ENCODE measurements at regions of chr3 and their contacts with region 1.

Region 1: DNA sequence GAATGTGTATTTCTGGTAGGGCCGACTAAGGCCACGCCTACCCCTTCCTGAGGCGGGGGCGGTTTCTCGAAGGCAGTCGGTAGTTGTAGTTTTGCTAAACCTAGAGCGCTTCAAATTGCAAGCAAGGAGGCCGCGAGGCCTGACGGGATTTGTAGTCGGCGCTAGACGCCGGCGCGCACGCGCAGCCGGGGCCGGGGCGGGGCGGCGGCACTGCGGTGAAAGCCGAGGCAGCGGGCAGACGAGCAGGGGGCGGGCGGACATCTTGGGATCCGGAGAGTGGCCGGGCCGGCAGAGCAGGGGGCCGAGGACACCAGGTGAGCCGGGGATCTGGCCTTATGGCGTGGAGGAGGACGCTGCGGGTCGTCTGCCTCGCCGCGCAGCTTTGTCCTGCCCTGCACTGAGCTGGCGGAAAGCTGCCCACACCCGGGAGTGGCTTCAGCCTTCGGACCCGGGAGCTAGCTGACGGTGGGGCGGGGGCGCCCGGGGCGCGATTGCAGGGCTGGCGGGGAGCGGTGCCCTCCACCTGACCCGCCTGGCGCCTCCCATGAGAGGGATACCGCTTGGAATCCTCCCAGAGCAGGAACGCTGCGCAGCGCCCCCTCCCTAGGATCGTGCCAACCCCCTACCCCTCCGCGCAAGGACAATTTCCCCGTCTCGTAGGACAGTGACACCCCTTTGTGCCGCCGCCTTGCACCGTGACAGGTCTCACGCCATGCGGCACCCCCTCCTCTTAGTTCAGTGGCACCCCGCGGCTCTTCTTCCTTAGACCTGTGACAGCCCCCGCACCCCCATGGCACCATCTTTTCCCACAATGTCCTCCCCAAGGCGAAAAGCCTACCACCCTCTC is at the start of gene AP2M1:
- DNase-seq: peak; percentile 99
- H3K4me3 ChIP-seq: peak within 1 kb of the TSS; percentile 94
- H3K27ac ChIP-seq: peak within 1 kb of the TSS; percentile 29
- H3K4me1 ChIP-seq: peaks cover 26% of the 10 kb centered on the region
- CTCF ChIP-seq: 0 out of 2 replicates have a peak, but pooled peaks have one; percentile 37
- total RNA-seq, gene AP2M1: 141 and 147 TPM in 2 replicates

Region 2: DNA sequence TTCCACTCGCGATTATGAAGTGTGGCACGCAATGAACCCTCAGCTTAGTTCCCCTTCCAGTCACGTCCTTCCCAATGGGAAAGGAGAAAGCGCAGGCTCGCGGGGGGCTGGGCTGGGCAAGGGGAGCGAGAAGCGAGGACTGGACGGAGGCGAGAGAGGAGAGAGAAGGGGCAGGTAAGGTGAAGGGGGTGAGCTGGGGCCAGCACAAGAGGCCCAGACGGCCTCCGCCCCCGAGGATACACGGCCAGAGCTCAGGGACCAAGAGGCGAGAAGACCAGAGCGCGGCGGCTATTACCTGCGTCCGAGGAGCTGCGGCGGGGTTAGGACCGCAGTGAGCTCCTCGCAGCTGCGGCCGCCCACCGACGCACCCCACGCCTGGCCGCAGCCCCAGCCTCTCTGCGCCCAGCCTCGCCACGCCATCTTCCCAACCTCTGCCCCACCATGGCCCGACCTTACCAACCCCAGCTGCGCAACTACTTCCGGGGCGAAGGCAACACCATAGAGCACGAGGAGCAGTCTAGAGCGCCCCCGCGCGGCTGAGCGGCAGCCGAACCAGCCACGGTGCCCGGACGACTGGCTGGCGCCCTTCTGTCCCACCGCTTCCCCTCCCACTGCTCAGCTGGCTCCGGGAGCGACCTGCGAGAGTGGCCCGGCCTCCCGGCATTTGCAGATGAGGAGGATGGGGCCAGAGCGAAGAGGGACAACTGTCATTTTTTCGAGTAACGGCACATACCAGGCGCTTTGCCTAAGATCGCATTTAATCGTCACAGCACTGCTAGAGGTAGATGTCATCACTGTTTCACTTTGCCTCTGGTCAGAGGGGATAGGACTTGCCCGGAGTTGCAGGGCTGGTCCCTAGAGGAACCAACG is 290.2 kb before region 1 on chr3 and contains the start of gene PARL:
- CTCF ChIA-PET with region 1: no interaction called
- POLR2A ChIA-PET with region 1: no interaction called
- intact Hi-C with region 1: no loop called
- DNase-seq: peak; percentile 95
- H3K4me3 ChIP-seq: peak within 1 kb of the TSS; percentile 76
- H3K27ac ChIP-seq: peak within 1 kb of the TSS; percentile 47
- H3K4me1 ChIP-seq: peaks cover 19% of the 10 kb centered on the region
- CTCF ChIP-seq: peak; percentile 86
- total RNA-seq, gene PARL: 43.5 and 46.1 TPM in 2 replicates

Region 3: GRCh38 chr3:184154885-184155643 is 19.8 kb before region 1 on chr3 and contains the start of gene DVL3:
- CTCF ChIA-PET with region 1: no interaction called
- POLR2A ChIA-PET with region 1: interaction called, 4 read pairs
- intact Hi-C with region 1: loop called (anchors 1 kb)
- DNase-seq: peak; percentile 74
- H3K4me3 ChIP-seq: peak within 1 kb of the TSS; percentile 92
- H3K27ac ChIP-seq: peak within 1 kb of the TSS; percentile 52
- H3K4me1 ChIP-seq: peaks cover 23% of the 10 kb centered on the region
- CTCF ChIP-seq: no peak
- total RNA-seq, gene DVL3: 38.5 and 41.3 TPM in 2 replicates

Region 4: DNA sequence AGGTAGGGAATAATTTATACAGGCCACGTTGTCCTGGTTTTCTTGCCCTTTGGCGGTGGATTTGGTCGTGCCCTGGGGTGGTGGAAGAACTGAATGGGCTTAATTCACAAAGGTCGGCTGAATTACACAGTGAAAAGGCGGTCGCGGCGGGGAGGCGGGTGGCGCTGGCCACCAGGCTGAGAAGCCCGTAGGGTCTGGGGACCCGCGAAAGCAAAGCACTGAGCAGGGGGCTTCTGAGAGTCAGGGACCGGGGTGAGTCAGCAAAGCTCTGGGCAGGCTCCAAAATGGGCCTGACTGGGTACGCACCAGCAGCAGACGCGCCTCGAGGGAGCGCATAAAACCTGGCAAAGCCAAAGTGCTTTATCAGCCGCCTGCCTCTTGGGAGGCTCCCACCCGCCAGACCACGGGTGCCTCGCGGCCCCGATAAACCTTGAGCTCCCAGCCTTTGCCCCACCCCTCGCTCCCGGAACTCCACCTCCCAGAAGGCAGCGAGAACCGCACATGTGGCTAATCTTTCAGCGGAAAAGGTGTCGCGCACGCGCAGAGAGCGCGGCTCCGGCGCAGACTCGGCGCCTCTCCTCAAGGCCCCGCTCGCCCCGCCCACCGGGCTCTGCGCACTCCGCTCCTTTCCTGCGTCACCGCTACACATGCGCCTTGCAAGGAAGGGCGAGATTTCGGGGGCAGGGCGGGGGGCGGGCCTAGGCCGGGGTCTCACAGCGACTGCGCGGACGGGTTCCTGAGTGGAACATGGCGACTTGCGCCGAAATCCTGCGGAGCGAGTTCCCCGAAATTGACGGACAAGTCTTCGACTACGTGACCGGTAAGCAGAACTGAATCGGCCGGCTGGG is 10.8 kb after region 1 on chr3 and contains the start of gene ABCF3:
- CTCF ChIA-PET with region 1: no interaction called
- POLR2A ChIA-PET with region 1: interaction called, 14 read pairs
- intact Hi-C with region 1: loop called (anchors 1 kb)
- DNase-seq: peak; percentile 99
- H3K4me3 ChIP-seq: peak within 1 kb of the TSS; percentile 97
- H3K27ac ChIP-seq: peak within 1 kb of the TSS; percentile 43
- H3K4me1 ChIP-seq: peaks cover 16% of the 10 kb centered on the region
- CTCF ChIP-seq: no peak
- total RNA-seq, gene ABCF3: 38.9 and 51.6 TPM in 2 replicates

Region 5: GRCh38 chr3:184298759-184299496 is 124.1 kb after region 1 on chr3 and contains the start of gene PSMD2:
- CTCF ChIA-PET with region 1: no interaction called
- POLR2A ChIA-PET with region 1: no interaction called
- intact Hi-C with region 1: loop called (anchors 2 kb)
- DNase-seq: peak; percentile 97
- H3K4me3 ChIP-seq: peak within 1 kb of the TSS; percentile 96
- H3K27ac ChIP-seq: peak within 1 kb of the TSS; percentile 24
- H3K4me1 ChIP-seq: peaks cover 12% of the 10 kb centered on the region
- CTCF ChIP-seq: no peak
- total RNA-seq, gene PSMD2: 158 and 205 TPM in 2 replicates

Region 6: DNA sequence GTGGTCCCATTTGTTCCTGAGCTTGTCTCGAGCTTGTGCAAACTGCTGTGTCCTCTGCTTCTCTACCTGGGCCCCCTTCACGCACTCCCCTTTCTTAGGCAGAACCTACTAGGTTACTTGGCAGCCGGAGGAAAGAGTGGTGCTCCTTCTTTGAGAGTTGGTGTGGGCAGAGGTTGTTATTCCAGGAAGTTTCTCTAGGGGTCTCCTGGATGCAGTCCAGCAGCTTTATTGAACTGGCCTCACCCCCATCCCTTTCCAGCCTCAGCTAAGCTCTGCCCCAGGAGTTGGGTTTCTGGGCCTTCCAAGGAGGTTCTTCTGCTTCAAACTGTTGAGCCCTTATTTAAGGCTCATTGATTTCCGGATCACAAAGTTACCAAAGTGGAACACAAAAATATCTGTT is 874.8 kb after region 1 on chr3:
- CTCF ChIA-PET with region 1: no interaction called
- POLR2A ChIA-PET with region 1: no interaction called
- intact Hi-C with region 1: no loop called
- DNase-seq: no peak
- H3K4me3 ChIP-seq: no peak overlapping the region
- H3K27ac ChIP-seq: no peak overlapping the region
- H3K4me1 ChIP-seq: no peaks in the 10 kb centered on the region
- CTCF ChIP-seq: no peak

Measured in OCI-LY7 (cell line).